Naive thymus-derived CD4-positive, alpha-beta T cell (primary cell): ENCODE measurements at regions of chr4 and their contacts with region 1.

Region 1: GRCh38 chr4:2963175-2963965 is at the starts of genes GRK4 and NOP14:
- DNase-seq: peak; percentile 91 to 98 (median 96)
- ATAC-seq: peak; percentile 97
- H3K4me3 ChIP-seq: peak within 1 kb of the TSS; percentile 98
- H3K4me3 Mint-ChIP-seq: peak within 1 kb of the TSS; percentile 82 to 95 (median 90)
- H3K27ac ChIP-seq: peak within 1 kb of the TSS; percentile 84
- H3K27ac Mint-ChIP-seq: peak within 1 kb of the TSS; percentile 67 to 93 (median 85)
- H3K4me1 ChIP-seq: peaks cover 18 to 19% of the 10 kb centered on the region in 2 donors
- H3K4me1 Mint-ChIP-seq: peaks cover 20 to 42% (median 35%) of the 10 kb centered on the region in 7 donors
- H3K27me3 ChIP-seq: no peaks in the 10 kb centered on the region
- H3K27me3 Mint-ChIP-seq: peaks cover 0 to 2% (median 0%) of the 10 kb centered on the region in 5 donors
- total RNA-seq, gene GRK4: 1.7 to 4.0 (median 2.8) TPM
- total RNA-seq, gene NOP14: 23.1 to 59.8 (median 43.9) TPM

Region 2: DNA sequence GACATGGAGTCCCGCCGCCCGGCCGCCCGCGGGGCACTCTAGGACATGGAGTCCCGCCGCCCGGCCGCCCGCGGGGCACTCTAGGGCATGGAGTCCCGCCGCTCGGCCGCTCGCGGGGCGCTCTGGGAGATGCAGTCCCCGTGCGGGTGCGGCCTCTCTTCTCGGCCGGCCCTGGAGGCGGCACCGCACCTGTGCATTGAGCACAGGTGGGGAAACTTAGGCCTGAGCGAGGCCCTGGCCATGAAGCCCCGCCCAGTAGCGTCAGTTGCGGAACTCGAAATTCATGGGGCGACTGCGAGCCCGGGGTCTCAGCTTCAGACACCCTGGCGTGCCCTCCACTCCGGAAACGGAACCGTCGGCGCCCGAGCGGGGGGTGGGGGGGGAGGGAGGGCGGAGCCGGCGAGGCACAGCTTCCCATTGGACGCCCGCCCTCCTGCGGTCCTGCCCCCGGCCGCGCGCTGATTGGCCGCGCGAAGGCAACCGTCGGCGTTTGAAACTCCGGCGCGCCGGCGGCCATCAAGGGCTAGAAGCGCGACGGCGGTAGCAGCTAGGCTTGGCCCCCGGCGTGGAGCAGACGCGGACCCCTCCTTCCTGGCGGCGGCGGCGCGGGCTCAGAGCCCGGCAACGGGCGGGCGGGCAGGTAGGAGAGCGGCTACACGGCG is 1242.2 kb before region 1 on chr4 and contains the starts of genes TACC3 and TMEM129:
- CTCF ChIA-PET with region 1: no interaction called
- POLR2A ChIA-PET with region 1: no interaction called
- intact Hi-C with region 1: loop called in 1 of 2 experiments (anchors 5 kb)
- DNase-seq: peak; percentile 79 to 97 (median 95)
- ATAC-seq: peak; percentile 92
- H3K4me3 ChIP-seq: peak within 1 kb of the TSS; percentile 70
- H3K4me3 Mint-ChIP-seq: peak within 1 kb of the TSS; percentile 79 to 97 (median 93)
- H3K27ac ChIP-seq: peak within 1 kb of the TSS; percentile 88
- H3K27ac Mint-ChIP-seq: peak within 1 kb of the TSS; percentile 98 to 100 (median 99)
- H3K4me1 ChIP-seq: peaks cover 45 to 52% of the 10 kb centered on the region in 2 donors
- H3K4me1 Mint-ChIP-seq: peaks cover 25 to 56% (median 52%) of the 10 kb centered on the region in 7 donors
- H3K27me3 ChIP-seq: no peaks in the 10 kb centered on the region
- H3K27me3 Mint-ChIP-seq: no peaks in the 10 kb centered on the region
- total RNA-seq, gene TACC3: 100 to 165 (median 162) TPM
- total RNA-seq, gene TMEM129: 20.0 to 41.1 (median 26.7) TPM

Region 3: GRCh38 chr4:2262143-2262943 is 701.0 kb before region 1 on chr4:
- CTCF ChIA-PET with region 1: interaction called, 3 read pairs
- POLR2A ChIA-PET with region 1: no interaction called
- intact Hi-C with region 1: loop called (anchors 1 to 5 kb)
- DNase-seq: peak; percentile 95 to 99 (median 98)
- ATAC-seq: peak; percentile 93
- H3K4me3 ChIP-seq: peak overlapping the region; percentile 69
- H3K4me3 Mint-ChIP-seq: peak overlapping the region; percentile 61 to 85 (median 76)
- H3K27ac ChIP-seq: peak overlapping the region; percentile 95
- H3K27ac Mint-ChIP-seq: peak overlapping the region; percentile 61 to 87 (median 83)
- H3K4me1 ChIP-seq: peaks cover 8 to 23% of the 10 kb centered on the region in 2 donors
- H3K4me1 Mint-ChIP-seq: peaks cover 0 to 11% (median 0%) of the 10 kb centered on the region in 7 donors
- H3K27me3 ChIP-seq: no peaks in the 10 kb centered on the region
- H3K27me3 Mint-ChIP-seq: no peaks in the 10 kb centered on the region

Region 4: DNA sequence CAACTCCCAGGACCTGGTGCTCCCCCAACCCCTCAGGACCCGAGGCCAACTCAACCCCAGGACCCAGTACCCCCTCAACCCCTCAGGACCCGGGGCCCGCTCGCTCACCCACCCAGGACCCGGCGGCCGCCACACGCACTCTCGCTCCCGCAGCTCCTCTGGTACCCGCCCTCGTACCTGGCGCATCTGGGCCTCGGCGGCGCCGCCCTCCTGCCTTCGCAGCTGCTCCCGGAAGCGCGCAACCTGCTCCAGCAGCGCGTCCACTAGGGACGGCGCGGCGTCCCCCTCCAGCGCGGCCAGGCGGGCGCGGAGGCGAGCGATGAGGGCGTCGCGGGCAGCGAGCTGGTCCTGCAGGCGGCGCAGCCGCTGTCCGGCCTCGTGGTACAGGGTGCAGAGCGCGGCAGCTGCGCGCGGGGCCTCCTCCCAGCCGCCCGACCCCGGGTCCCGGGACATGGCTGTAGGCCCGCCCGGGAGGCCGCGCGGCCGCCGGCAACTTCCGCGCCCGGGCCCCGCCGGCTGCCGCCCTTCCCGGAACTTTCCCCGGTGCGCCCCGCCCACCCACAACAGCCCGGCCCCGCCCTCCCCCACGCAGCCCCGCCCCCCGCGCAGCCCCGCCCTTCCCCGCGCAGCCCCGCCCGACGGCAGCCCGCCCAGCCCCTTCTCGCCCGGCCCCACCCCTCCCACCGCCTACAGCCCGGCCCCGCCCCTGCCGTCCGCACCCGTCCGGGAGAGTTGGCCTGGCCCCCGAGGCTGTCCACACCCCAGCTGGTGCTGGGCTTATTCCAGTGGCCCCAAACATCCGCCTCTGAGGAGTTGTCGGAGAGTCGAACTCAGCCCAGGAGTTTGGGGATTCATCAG is 207.3 kb before region 1 on chr4 and contains the start of gene TNIP2:
- CTCF ChIA-PET with region 1: no interaction called
- POLR2A ChIA-PET with region 1: interaction called, 3 read pairs
- intact Hi-C with region 1: loop called in 1 of 2 experiments (anchors 1 kb)
- DNase-seq: peak; percentile 65 to 85 (median 74)
- ATAC-seq: peak; percentile 90
- H3K4me3 ChIP-seq: peak within 1 kb of the TSS; percentile 64
- H3K4me3 Mint-ChIP-seq: peak within 1 kb of the TSS; percentile 75 to 93 (median 87)
- H3K27ac ChIP-seq: peak within 1 kb of the TSS; percentile 91
- H3K27ac Mint-ChIP-seq: peak within 1 kb of the TSS; percentile 54 to 94 (median 86)
- H3K4me1 ChIP-seq: peaks cover 9 to 12% of the 10 kb centered on the region in 2 donors
- H3K4me1 Mint-ChIP-seq: peaks cover 22 to 29% (median 26%) of the 10 kb centered on the region in 7 donors
- H3K27me3 ChIP-seq: no peaks in the 10 kb centered on the region
- H3K27me3 Mint-ChIP-seq: no peaks in the 10 kb centered on the region
- total RNA-seq, gene TNIP2: 39.4 to 56.0 (median 43.6) TPM

Region 5: DNA sequence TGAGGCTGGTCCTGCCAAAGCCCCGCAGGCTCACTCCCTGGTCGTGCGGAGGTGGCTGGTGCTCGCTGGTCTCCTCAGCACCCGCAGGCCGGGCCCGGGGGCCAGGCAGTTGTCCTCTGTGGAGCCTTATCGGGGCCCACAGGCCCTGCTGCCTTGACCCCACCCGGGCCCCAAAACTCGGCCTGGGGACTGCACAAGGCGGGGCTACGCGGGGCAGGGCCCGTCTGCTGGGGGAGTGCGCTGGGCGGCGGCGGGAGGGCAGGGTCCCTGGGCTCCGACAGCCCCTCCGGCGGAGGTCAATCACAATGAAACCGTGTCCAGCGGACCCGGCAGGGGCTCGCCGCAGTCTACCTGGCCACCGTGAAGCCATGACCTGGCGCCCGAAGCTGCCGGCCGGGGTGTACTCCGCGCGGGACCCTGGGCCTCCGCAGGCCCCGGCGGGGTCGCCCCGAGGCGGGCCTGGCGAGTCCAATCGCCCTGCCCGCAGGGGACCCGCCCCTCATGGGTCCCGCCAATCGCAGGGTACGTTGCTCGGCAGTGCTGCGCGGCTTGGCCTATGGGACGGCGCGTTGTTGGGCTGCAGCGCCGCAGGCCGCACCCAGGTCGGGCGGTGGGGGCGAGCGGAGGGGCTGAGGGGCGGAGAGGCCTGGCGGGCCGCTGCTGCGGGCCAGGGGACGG is 120.0 kb before region 1 on chr4 and contains the start of gene ADD1:
- CTCF ChIA-PET with region 1: interaction called, 4 read pairs
- POLR2A ChIA-PET with region 1: interaction called, 4 read pairs
- intact Hi-C with region 1: loop called in 1 of 2 experiments (anchors 1 kb)
- DNase-seq: peak; percentile 84 to 100 (median 94)
- ATAC-seq: peak; percentile 98
- H3K4me3 ChIP-seq: peak within 1 kb of the TSS; percentile 80
- H3K4me3 Mint-ChIP-seq: peak within 1 kb of the TSS; percentile 87 to 100 (median 92)
- H3K27ac ChIP-seq: peak within 1 kb of the TSS; percentile 95
- H3K27ac Mint-ChIP-seq: peak within 1 kb of the TSS; percentile 85 to 97 (median 93)
- H3K4me1 ChIP-seq: peaks cover 33 to 40% of the 10 kb centered on the region in 2 donors
- H3K4me1 Mint-ChIP-seq: peaks cover 39 to 75% (median 59%) of the 10 kb centered on the region in 7 donors
- H3K27me3 ChIP-seq: no peaks in the 10 kb centered on the region
- H3K27me3 Mint-ChIP-seq: no peaks in the 10 kb centered on the region
- total RNA-seq, gene ADD1: 211 to 300 (median 282) TPM

Region 6: GRCh38 chr4:3047464-3048286 is 84.3 kb after region 1 on chr4:
- CTCF ChIA-PET with region 1: interaction called, 4 read pairs
- POLR2A ChIA-PET with region 1: no interaction called
- intact Hi-C with region 1: loop called in 1 of 2 experiments (anchors 1 kb)
- DNase-seq: peak; percentile 40 to 75 (median 58)
- ATAC-seq: peak; percentile 79
- H3K4me3 ChIP-seq: peak overlapping the region; percentile 65
- H3K4me3 Mint-ChIP-seq: peak overlapping the region; percentile 62 to 92 (median 83)
- H3K27ac ChIP-seq: peak overlapping the region; percentile 61
- H3K27ac Mint-ChIP-seq: peak overlapping the region; percentile 79 to 90 (median 84)
- H3K4me1 ChIP-seq: peaks cover 16 to 18% of the 10 kb centered on the region in 2 donors
- H3K4me1 Mint-ChIP-seq: peaks cover 17 to 45% (median 35%) of the 10 kb centered on the region in 7 donors
- H3K27me3 ChIP-seq: no peaks in the 10 kb centered on the region
- H3K27me3 Mint-ChIP-seq: peaks cover 0 to 17% (median 0%) of the 10 kb centered on the region in 5 donors

Region 7: DNA sequence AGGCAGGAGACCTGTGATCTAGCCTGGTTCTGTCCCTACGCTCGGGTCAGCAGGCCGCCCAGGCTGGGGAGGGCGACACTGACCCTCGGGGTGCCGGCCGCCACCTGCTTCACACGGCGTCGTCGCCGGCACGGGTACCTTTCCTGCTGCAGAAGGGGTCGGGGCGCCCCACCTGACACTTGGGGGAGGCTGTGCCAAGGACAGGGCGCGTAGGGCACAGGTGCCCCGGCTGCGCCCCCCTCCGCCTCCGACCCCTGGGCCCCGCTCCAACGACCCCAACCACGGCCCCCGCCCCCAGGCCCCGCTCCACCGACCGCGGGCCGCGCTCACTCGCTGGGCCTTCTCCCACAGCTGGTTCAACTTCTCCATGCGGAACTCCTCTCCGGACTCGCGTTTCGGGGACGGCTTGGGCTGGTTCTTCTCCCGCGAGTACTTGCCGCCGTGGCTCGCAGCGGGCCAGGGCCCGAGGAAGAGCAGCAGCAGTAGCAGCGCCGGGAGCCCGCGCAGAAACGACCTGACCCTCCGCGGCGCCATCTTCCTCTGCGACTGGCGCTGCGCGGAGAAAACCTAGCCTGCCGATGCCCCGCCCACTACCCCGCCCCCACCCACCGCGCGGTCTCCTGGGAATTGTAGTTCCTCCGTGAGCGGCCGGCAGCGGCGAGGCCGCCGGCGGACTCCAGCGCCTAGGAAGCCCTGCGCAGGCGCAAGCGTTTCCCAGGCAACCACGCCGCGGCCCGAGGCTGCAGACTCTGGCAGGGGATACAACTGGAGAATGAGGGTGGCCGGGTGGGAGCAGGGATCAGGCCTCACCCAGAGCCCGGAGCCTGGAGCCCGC is 568.7 kb after region 1 on chr4 and contains the start of gene LRPAP1:
- CTCF ChIA-PET with region 1: no interaction called
- POLR2A ChIA-PET with region 1: no interaction called
- intact Hi-C with region 1: loop called (anchors 1 kb)
- DNase-seq: peak; percentile 69 to 92 (median 78)
- ATAC-seq: peak; percentile 96
- H3K4me3 ChIP-seq: peak within 1 kb of the TSS; percentile 83
- H3K4me3 Mint-ChIP-seq: peak within 1 kb of the TSS; percentile 95 to 100 (median 99)
- H3K27ac ChIP-seq: peak within 1 kb of the TSS; percentile 84
- H3K27ac Mint-ChIP-seq: peak within 1 kb of the TSS; percentile 91 to 99 (median 95)
- H3K4me1 ChIP-seq: peaks cover 16 to 32% of the 10 kb centered on the region in 2 donors
- H3K4me1 Mint-ChIP-seq: peaks cover 18 to 50% (median 39%) of the 10 kb centered on the region in 7 donors
- H3K27me3 ChIP-seq: no peaks in the 10 kb centered on the region
- H3K27me3 Mint-ChIP-seq: peaks cover 5 to 10% (median 6%) of the 10 kb centered on the region in 5 donors
- total RNA-seq, gene LRPAP1: 65.2 to 88.6 (median 79.4) TPM